Psoas muscle (tissue), 8 donors: ENCODE measurements at regions of chr11 and their contacts with region 1.

Region 1: DNA sequence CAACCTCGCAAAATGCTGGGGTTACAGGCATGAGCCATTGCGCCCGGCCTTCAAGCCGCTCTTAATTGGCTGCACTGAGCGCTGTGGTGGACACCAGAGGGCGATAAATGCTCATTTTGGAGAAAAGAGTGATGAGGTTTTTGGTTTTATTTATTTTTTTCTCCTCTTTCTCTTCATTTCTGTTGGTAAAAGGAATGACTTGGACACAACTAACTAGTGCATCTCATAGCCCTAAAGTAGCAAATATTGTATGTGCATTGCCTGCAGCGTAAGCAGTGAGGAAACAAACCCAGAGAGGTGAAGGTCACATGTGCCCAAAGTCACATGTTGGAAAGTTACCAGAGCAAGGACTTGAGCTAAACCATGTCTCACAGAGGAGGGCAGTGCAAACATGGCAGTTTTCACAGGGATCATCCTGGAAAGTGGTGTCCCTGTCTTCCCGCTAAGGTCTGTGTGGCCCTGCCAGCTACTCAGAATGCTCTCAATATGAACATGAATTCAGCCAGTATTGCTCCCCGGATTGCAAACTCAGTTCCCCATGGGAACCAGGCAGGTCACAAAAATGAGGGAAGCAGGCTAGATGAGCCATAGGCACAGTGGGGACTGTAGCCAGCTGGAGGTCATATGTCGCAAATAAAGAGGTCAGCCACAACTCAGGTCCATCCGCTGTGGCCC is 8.6 kb upstream of the CD82 start:
- DNase-seq: peak; percentile 49 to 78
- ATAC-seq: peak; percentile 78 to 95 (median 84)
- H3K4me3 ChIP-seq: no peak overlapping the region
- H3K27ac ChIP-seq: no peak overlapping the region
- H3K4me1 ChIP-seq: peaks cover 4% of the 10 kb centered on the region
- H3K27me3 ChIP-seq: peaks cover 0 to 1% (median 0%) of the 10 kb centered on the region in 3 donors
- CTCF ChIP-seq: peak; percentile 80

Region 2: GRCh38 chr11:44456544-44457300 is 100.2 kb before region 1 on chr11:
- intact Hi-C with region 1: no loop called
- DNase-seq: no peak
- ATAC-seq: peak in 2 of 4 donors; percentile 38 to 58
- H3K4me3 ChIP-seq: no peak overlapping the region
- H3K27ac ChIP-seq: no peak overlapping the region
- H3K4me1 ChIP-seq: no peaks in the 10 kb centered on the region
- H3K27me3 ChIP-seq: no peaks in the 10 kb centered on the region
- CTCF ChIP-seq: no peak

Region 3: DNA sequence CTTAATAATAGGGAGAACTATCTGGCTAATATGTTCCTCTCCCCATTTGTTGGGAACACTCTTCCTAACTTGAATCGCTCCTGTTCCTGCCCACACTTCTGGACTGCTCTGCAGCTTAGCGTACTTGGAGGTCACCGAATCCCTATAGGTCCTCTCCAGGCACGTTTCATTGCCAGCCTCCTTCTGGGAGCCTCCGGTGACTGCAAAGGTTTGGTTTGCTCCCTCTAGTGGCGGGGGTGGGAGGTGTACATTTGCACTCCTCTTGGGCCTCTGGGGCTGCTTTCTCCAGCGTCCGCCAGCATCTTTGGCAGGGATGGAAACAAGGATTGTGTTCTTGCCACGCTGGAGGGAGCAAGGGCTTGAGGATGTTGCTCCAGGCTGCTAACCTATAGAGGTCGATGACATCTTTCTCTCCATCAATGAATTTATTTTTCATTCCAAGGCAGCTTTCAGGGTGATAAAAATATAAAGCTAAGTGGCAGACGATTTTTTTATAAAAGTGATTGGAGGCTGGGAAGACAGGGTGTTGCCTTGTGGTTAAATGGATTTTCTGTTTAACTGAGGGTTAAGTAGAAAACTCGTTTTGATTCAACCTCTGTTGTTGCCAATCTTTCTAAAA is 218.6 kb after region 1 on chr11:
- intact Hi-C with region 1: loop called in 1 of 2 experiments (anchors 10 kb)
- DNase-seq: peak; percentile 48 to 67
- ATAC-seq: peak; percentile 60 to 79 (median 76)
- H3K4me3 ChIP-seq: no peak overlapping the region
- H3K27ac ChIP-seq: no peak overlapping the region
- H3K4me1 ChIP-seq: no peaks in the 10 kb centered on the region
- H3K27me3 ChIP-seq: peaks cover 0 to 5% (median 0%) of the 10 kb centered on the region in 3 donors
- CTCF ChIP-seq: peak; percentile 62

Region 4: DNA sequence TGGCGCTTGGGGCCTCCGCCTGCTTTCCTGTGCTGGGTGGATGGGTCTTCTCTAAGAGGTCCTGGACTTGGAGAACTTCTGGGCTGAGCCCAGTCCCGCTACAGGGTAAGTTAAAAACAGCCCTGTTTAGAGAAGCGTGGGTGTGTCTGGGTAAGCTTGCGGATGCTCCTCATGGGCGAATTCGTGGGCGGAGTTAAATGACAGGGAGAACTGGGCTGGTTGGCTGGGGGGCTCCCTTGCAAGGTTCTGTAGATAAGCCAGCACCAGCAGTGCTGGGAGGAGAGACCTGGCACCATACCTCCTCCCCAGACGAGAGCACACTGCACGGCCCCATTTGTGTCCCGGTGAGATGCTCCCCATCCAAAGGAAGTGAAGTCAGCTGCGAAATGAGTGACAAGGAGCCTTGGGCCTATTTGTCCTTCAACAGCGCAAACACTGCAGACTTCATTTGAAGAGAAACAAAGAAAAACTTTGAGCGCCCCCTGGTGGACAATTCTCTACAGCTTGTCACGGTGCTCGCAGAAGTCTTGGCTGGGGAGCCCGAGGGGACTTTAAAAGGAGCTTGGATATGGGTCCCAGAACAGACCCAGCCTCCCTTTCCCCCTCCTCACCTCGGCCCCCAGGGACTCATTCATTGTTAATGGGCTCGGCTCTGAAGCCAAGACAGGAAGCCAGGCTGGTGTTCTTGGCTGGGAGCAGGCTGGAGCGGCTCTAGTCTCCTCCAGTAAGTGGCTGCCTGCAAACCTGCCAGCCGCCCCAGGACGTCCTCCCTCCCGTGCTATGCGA is 354.4 kb after region 1 on chr11:
- intact Hi-C with region 1: loop called (anchors 5 kb)
- DNase-seq: peak; percentile 73 to 82
- ATAC-seq: peak; percentile 81 to 92 (median 86)
- H3K4me3 ChIP-seq: no peak overlapping the region
- H3K27ac ChIP-seq: no peak overlapping the region
- H3K4me1 ChIP-seq: no peaks in the 10 kb centered on the region
- H3K27me3 ChIP-seq: peaks cover 0 to 3% (median 0%) of the 10 kb centered on the region in 3 donors
- CTCF ChIP-seq: peak; percentile 90